ENCODE measurements at regions of chr13 and their contacts with region 1.

Region 1: GRCh38 chr13:29508130-29508875 is 87.2 kb downstream of the SLC7A1 start:
- DNase-seq: peak in 1 of 2 donors; percentile 89
- H3K4me3 ChIP-seq: peak overlapping the region in 1 of 2 donors; percentile 16
- H3K27ac ChIP-seq: no peak overlapping the region
- H3K4me1 ChIP-seq: peaks cover 0 to 3% of the 10 kb centered on the region in 2 donors
- H3K27me3 ChIP-seq: no peaks in the 10 kb centered on the region
- CTCF ChIP-seq: peak; percentile 83 to 99 (median 95)

Region 2: DNA sequence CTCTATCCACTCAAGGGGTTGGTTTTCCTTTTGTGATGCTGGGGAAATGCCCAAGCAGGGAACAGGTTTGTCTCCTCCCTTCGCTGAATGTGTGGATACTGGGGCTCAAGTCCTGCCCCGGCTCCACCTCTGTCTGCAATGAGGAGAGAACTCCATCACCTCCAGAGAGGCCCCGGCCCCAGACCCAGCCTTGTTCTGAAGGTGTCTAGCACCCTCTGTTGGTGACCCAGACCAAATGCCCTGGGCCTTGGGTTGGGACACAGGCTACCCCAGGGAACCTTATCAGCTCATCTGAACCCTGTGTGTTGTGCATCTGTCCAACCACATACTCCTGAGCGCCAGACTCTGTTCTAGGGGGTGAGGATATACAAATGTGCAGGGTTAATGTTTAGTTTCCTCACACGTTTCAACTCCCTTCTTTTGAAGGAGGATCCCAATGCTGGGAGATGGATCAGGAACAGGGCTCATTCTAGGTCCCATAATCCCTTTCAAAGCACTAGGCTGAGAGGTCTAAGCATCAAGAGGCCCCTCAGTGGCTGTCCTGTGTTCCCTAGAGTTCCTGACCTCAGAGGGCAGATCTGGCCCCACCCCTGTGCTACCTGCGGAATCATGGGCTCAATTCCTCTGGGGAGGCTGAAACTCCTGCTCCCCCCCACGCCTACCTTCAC is 199.7 kb after region 1 on chr13:
- intact Hi-C with region 1: loop called (anchors 2 kb)
- DNase-seq: no peak
- H3K4me3 ChIP-seq: no peak overlapping the region
- H3K27ac ChIP-seq: no peak overlapping the region
- H3K4me1 ChIP-seq: no peaks in the 10 kb centered on the region
- H3K27me3 ChIP-seq: no peaks in the 10 kb centered on the region
- CTCF ChIP-seq: peak in 2 of 3 experiments; percentile 9 to 32

Region 3: DNA sequence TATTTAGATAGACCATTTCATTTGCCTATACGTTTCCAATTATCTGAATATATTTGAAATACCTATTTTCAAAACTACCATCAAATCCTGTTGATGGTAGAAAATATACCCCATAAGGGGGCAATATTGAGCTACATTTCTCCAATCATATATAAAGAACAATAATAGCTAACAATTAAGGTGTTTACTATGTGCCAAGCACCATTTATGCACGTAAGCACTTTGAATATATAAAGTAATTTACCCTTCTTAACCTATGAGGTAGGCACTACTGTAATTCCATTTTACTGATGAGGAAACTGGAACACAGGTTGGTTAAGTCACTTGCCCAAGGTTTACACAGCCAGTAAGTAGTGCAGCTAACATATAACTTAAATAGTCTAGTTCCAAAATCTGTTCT is 262.9 kb after region 1 on chr13:
- intact Hi-C with region 1: loop called (anchors 5 kb)
- DNase-seq: no peak
- H3K4me3 ChIP-seq: no peak overlapping the region
- H3K27ac ChIP-seq: no peak overlapping the region
- H3K4me1 ChIP-seq: no peaks in the 10 kb centered on the region
- H3K27me3 ChIP-seq: no peaks in the 10 kb centered on the region
- CTCF ChIP-seq: peak; percentile 16 to 49 (median 41)

Region 4: DNA sequence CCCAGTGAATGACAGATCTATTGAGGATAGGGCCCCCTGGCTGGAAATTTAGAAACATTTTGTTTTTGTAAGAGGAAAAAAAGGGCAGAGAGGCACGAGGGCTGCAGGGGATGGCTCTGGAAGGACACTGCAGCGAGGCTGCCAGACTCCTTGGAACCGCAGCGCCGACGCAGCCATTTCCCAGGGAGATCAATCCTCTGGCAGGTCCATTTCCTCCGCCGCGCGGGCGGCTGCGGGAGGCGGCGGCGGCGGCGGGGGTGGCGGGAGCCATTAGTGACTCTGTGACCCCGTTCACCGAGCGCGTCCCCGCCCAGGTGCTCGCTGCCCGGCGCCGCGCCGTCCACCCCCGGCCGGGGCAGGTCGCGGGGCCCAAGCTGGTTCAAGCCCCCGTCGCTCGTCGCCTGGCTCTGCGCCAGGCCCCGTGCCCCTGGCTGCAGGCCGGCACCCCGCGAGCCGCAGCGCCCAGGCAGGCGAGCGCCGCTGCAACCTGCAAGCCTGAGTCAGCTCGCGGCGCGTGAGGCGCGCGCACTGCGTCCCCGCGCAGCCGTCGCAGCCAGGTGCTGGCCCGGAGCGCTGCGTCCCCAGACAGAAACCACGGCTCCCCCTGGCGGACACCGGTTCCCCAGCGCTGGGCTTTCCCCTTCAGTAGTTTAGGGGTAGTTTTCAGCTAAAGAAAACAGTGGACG is 606.4 kb after region 1 on chr13:
- intact Hi-C with region 1: loop called (anchors 1 kb)
- DNase-seq: peak; percentile 56 to 95
- H3K4me3 ChIP-seq: peak overlapping the region; percentile 75 to 76
- H3K27ac ChIP-seq: peak overlapping the region; percentile 54 to 60
- H3K4me1 ChIP-seq: peaks cover 0 to 10% of the 10 kb centered on the region in 2 donors
- H3K27me3 ChIP-seq: no peaks in the 10 kb centered on the region
- CTCF ChIP-seq: peak; percentile 84 to 95 (median 88)

Region 5: GRCh38 chr13:30453727-30454126 is 945.4 kb after region 1 on chr13:
- intact Hi-C with region 1: no loop called
- DNase-seq: no peak
- H3K4me3 ChIP-seq: no peak overlapping the region
- H3K27ac ChIP-seq: no peak overlapping the region
- H3K4me1 ChIP-seq: peaks cover 0 to 2% of the 10 kb centered on the region in 2 donors
- H3K27me3 ChIP-seq: no peaks in the 10 kb centered on the region
- CTCF ChIP-seq: no peak

Measured in ascending aorta (tissue), 2 donors.